Caco-2 (cell line): ENCODE measurements at regions of chr9 and their contacts with region 1.

Region 1: DNA sequence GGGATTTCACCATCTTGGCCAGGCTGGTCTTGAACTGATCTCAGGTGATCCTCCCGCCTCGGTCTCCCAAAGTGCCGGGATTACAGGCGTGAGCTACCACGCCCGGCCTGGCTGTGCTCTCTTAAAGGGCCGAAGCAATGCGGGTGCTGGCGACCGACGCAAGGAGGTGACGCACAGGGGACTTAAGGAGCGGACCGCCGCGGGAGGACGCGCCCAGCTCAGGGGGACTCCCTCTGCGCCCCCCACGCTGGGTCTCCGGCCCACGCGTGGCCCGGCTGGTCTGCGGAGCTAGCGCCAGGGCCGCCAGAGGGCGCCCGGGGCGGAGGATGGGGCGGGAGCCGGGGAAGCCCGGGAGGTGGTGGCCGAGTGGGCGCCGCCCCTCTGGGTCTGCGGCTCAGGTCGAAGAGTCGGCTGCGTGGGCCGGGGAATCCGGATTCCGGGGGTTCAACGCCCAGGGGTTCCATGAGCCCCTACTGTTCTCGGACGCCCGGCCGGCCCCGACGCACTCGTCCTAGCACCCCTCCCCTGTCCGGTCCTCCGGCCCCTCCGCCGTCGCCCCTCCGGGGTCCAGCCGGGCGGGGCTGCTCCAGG is 502 bp upstream of the CERCAM start:
- DNase-seq: peak; percentile 68 to 86
- H3K4me3 ChIP-seq: peak overlapping the region; percentile 78
- H3K4me3 Mint-ChIP-seq: peak overlapping the region; percentile 75
- H3K27ac Mint-ChIP-seq: peak overlapping the region; percentile 42
- H3K4me1 ChIP-seq: peaks cover 35% of the 10 kb centered on the region
- H3K4me1 Mint-ChIP-seq: peaks cover 16% of the 10 kb centered on the region
- H3K27me3 ChIP-seq: no peaks in the 10 kb centered on the region
- H3K27me3 Mint-ChIP-seq: no peaks in the 10 kb centered on the region
- CTCF ChIP-seq: peak; percentile 76 to 91

Region 2: GRCh38 chr9:128361986-128362646 is 58.0 kb before region 1 on chr9:
- CTCF ChIA-PET with region 1: interaction called, 28 read pairs
- POLR2A ChIA-PET with region 1: interaction called, 6 read pairs
- intact Hi-C with region 1: loop called (anchors 2 kb)
- DNase-seq: peak; percentile 82 to 85
- H3K4me3 ChIP-seq: peak overlapping the region; percentile 34
- H3K4me3 Mint-ChIP-seq: peak overlapping the region; percentile 81
- H3K27ac Mint-ChIP-seq: peak overlapping the region; percentile 83
- H3K4me1 ChIP-seq: peaks cover 8% of the 10 kb centered on the region; the same call in 1 of the 2 replicates
- H3K4me1 Mint-ChIP-seq: peaks cover 7% of the 10 kb centered on the region
- H3K27me3 ChIP-seq: no peaks in the 10 kb centered on the region
- H3K27me3 Mint-ChIP-seq: no peaks in the 10 kb centered on the region
- CTCF ChIP-seq: peak; percentile 82 to 89

Region 3: DNA sequence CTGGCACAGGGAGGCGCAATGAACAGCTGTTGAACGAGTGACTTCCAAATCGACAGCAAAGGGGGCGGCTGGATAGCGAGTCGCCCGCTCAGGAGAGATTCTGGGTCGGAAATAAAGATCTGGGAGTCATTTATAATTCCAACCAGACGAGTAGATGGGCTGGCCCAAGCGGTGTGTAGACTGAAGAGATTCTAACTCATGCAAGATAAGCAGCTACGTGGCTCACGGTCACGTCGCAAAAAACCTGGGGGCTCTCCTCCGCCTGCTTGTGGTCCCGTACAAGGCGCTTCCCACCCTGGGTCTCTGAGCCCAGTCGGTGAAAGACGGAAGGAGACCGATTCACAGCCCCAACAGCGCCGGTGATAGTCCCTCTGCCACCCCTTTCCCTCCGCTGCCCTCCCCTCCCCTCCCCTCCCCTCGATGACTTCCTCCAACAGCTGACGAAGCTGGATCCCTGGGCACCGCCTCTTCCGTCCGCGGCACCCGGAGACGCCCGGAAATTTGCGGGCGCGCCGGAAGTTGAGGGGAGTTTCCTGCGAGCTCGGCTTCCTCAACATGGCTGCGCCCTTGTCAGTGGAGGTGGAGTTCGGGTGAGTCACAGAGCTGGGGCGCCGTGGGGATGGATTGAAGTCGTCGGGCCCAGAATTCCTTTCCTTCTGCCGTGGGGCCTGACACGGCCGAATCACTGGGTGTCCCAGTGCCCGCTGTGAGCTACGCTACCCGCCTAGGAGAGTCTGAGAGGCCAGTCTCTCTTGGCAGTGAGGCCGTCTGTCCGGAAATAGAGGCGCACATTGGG is 49.1 kb before region 1 on chr9 and contains the start of gene URM1:
- CTCF ChIA-PET with region 1: interaction called, 16 read pairs
- POLR2A ChIA-PET with region 1: interaction called, 5 read pairs
- intact Hi-C with region 1: no loop called
- DNase-seq: peak; percentile 93 to 94
- H3K4me3 ChIP-seq: peak within 1 kb of the TSS; percentile 100
- H3K4me3 Mint-ChIP-seq: peak within 1 kb of the TSS; percentile 79
- H3K27ac Mint-ChIP-seq: peak within 1 kb of the TSS; percentile 71
- H3K4me1 ChIP-seq: peaks cover 12% of the 10 kb centered on the region; the same call in 1 of the 2 replicates
- H3K4me1 Mint-ChIP-seq: peaks cover 14% of the 10 kb centered on the region
- H3K27me3 ChIP-seq: no peaks in the 10 kb centered on the region
- H3K27me3 Mint-ChIP-seq: no peaks in the 10 kb centered on the region
- CTCF ChIP-seq: no peak
- total RNA-seq, gene URM1: 55.9 and 62.7 TPM in 2 replicates

Region 4: GRCh38 chr9:128438343-128439109 is 18.4 kb after region 1 on chr9:
- CTCF ChIA-PET with region 1: interaction called, 12 read pairs
- POLR2A ChIA-PET with region 1: no interaction called
- intact Hi-C with region 1: no loop called
- DNase-seq: peak; percentile 82 to 88
- H3K4me3 ChIP-seq: no peak overlapping the region
- H3K4me3 Mint-ChIP-seq: no peak overlapping the region
- H3K27ac Mint-ChIP-seq: no peak overlapping the region
- H3K4me1 ChIP-seq: no peaks in the 10 kb centered on the region
- H3K4me1 Mint-ChIP-seq: no peaks in the 10 kb centered on the region
- H3K27me3 ChIP-seq: no peaks in the 10 kb centered on the region
- H3K27me3 Mint-ChIP-seq: no peaks in the 10 kb centered on the region
- CTCF ChIP-seq: peak; percentile 93 to 94

Region 5: GRCh38 chr9:128593039-128593438 is 172.9 kb after region 1 on chr9:
- CTCF ChIA-PET with region 1: no interaction called
- POLR2A ChIA-PET with region 1: no interaction called
- intact Hi-C with region 1: no loop called
- DNase-seq: no peak
- H3K4me3 ChIP-seq: no peak overlapping the region
- H3K4me3 Mint-ChIP-seq: no peak overlapping the region
- H3K27ac Mint-ChIP-seq: no peak overlapping the region
- H3K4me1 ChIP-seq: 0 out of 2 replicates have a peak, but pooled peaks cover 3% of the 10 kb centered on the region
- H3K4me1 Mint-ChIP-seq: no peaks in the 10 kb centered on the region
- H3K27me3 ChIP-seq: no peaks in the 10 kb centered on the region
- H3K27me3 Mint-ChIP-seq: no peaks in the 10 kb centered on the region
- CTCF ChIP-seq: no peak